IMR-90 (cell line): ENCODE measurements at regions of chr5 and their contacts with region 1.

Region 1: DNA sequence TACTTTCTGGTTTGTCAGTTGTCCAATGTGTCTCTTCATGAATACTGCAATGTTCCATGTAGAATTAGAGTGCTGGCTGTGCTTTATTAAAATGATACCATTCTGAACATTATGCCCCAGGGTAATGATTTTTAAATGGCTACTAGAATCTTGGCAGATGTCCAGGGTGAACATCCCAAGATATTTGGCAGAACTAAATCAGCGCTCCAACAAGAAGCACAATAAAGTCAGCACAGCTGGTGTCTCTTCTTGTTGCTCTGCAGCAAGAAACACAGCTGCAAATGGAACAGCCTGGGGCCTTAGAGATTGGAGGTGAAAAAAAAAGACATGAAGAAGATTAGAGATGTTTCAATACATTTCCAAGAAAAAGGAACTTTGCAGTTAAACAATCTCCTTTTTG is 248.3 kb downstream of the CDH18 start:
- DNase-seq: no peak
- ATAC-seq: no peak
- H3K4me3 ChIP-seq: no peak overlapping the region
- H3K27ac ChIP-seq: no peak overlapping the region
- H3K4me1 ChIP-seq: no peaks in the 10 kb centered on the region
- H3K27me3 ChIP-seq: no peaks in the 10 kb centered on the region
- CTCF ChIP-seq: no peak
- POLR2A ChIP-seq: no peak
- RAD21 ChIP-seq: no peak

Region 2: DNA sequence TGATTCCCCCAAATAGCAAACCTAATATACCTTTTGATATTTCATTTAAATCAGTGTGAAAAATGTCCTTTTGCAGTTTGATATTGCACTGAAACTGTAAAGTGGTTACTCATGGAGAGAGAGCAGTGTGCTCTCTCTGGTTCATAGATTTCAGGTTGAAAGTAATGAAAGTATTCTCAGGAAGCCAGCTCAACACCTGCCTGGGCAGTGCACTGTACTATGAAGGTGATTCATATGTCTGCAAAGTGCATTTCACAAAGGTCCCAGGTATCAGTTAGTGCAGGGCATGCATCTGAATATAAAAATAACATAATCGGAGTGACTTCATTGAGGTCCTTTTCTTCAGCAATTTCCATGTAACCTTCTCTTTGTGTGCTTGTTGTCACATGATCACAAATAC is 25.9 kb before region 1 on chr5:
- CTCF ChIA-PET with region 1: no interaction called
- POLR2A ChIA-PET with region 1: no interaction called
- dilution Hi-C with region 1: no loop called
- in situ Hi-C with region 1: no loop called
- intact Hi-C with region 1: loop called (anchors 1 kb)
- DNase-seq: no peak
- ATAC-seq: no peak
- H3K4me3 ChIP-seq: no peak overlapping the region
- H3K27ac ChIP-seq: no peak overlapping the region
- H3K4me1 ChIP-seq: no peaks in the 10 kb centered on the region
- H3K27me3 ChIP-seq: no peaks in the 10 kb centered on the region
- CTCF ChIP-seq: no peak
- POLR2A ChIP-seq: no peak
- RAD21 ChIP-seq: no peak

Region 3: GRCh38 chr5:19903611-19904010 is 163.9 kb after region 1 on chr5:
- CTCF ChIA-PET with region 1: no interaction called
- POLR2A ChIA-PET with region 1: no interaction called
- dilution Hi-C with region 1: no loop called
- in situ Hi-C with region 1: no loop called
- intact Hi-C with region 1: no loop called
- DNase-seq: no peak
- ATAC-seq: no peak
- H3K4me3 ChIP-seq: no peak overlapping the region
- H3K27ac ChIP-seq: no peak overlapping the region
- H3K4me1 ChIP-seq: no peaks in the 10 kb centered on the region
- H3K27me3 ChIP-seq: no peaks in the 10 kb centered on the region
- CTCF ChIP-seq: no peak
- POLR2A ChIP-seq: no peak
- RAD21 ChIP-seq: no peak